ENCODE measurements at regions of chr17 and their contacts with region 1.

Region 1: GRCh38 chr17:34720760-34721159 is 141.4 kb downstream of the TMEM132E start:
- DNase-seq: peak; percentile 78
- ATAC-seq: peak; percentile 80
- H3K4me3 ChIP-seq: no peak overlapping the region
- H3K27ac ChIP-seq: no peak overlapping the region
- H3K4me1 ChIP-seq: peaks cover 3% of the 10 kb centered on the region; the same call in 1 of the 2 replicates
- H3K27me3 ChIP-seq: no peaks in the 10 kb centered on the region
- CTCF ChIP-seq: no peak

Region 2: GRCh38 chr17:34692920-34693319 is 27.8 kb before region 1 on chr17:
- CTCF ChIA-PET with region 1: no interaction called
- POLR2A ChIA-PET with region 1: no interaction called
- in situ Hi-C with region 1: no loop called
- intact Hi-C with region 1: loop called (anchors 1 kb)
- DNase-seq: no peak
- ATAC-seq: no peak
- H3K4me3 ChIP-seq: no peak overlapping the region
- H3K27ac ChIP-seq: no peak overlapping the region
- H3K4me1 ChIP-seq: no peaks in the 10 kb centered on the region
- H3K27me3 ChIP-seq: peaks cover 12% of the 10 kb centered on the region
- CTCF ChIP-seq: no peak

Region 3: DNA sequence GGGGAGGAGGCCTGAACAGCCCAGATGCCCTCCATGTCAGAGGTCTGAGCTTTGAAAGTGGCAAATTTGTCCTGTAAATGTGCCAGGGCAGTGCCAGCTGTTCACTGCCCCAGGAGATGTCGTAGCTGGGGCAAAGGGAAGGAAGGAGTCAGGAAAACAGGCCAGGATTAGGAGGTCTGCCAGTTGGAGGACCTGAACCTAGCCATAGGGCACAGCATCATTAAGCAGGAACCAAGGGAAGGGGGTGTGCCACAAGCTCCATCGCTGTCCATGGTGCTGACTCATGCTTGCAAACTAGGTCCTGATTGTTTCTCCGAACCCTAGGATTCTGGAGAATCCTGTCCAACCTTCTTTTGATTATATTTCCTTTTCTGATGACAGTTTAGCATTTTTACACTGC is 17.2 kb before region 1 on chr17:
- CTCF ChIA-PET with region 1: no interaction called
- POLR2A ChIA-PET with region 1: no interaction called
- in situ Hi-C with region 1: no loop called
- intact Hi-C with region 1: no loop called
- DNase-seq: no peak
- ATAC-seq: no peak
- H3K4me3 ChIP-seq: no peak overlapping the region
- H3K27ac ChIP-seq: no peak overlapping the region
- H3K4me1 ChIP-seq: no peaks in the 10 kb centered on the region
- H3K27me3 ChIP-seq: peaks cover 5% of the 10 kb centered on the region
- CTCF ChIP-seq: no peak